Left ventricle myocardium superior (tissue), 1 donor: ENCODE measurements at regions of chr1 and their contacts with region 1.

Region 1: GRCh38 chr1:15272009-15272788 is 25.2 kb downstream of the FHAD1 start:
- DNase-seq: peak; percentile 60
- ATAC-seq: peak; percentile 88

Region 2: GRCh38 chr1:15128520-15129313 is 143.5 kb before region 1 on chr1:
- intact Hi-C with region 1: loop called (anchors 5 kb)
- DNase-seq: peak; percentile 78
- ATAC-seq: peak; percentile 95

Region 3: GRCh38 chr1:15141935-15142539 is 130.2 kb before region 1 on chr1:
- intact Hi-C with region 1: no loop called
- DNase-seq: peak; percentile 68
- ATAC-seq: peak; percentile 93

Region 4: GRCh38 chr1:15152318-15153183 is 119.6 kb before region 1 on chr1:
- intact Hi-C with region 1: loop called (anchors 10 kb)
- DNase-seq: peak; percentile 87
- ATAC-seq: peak; percentile 72

Region 5: DNA sequence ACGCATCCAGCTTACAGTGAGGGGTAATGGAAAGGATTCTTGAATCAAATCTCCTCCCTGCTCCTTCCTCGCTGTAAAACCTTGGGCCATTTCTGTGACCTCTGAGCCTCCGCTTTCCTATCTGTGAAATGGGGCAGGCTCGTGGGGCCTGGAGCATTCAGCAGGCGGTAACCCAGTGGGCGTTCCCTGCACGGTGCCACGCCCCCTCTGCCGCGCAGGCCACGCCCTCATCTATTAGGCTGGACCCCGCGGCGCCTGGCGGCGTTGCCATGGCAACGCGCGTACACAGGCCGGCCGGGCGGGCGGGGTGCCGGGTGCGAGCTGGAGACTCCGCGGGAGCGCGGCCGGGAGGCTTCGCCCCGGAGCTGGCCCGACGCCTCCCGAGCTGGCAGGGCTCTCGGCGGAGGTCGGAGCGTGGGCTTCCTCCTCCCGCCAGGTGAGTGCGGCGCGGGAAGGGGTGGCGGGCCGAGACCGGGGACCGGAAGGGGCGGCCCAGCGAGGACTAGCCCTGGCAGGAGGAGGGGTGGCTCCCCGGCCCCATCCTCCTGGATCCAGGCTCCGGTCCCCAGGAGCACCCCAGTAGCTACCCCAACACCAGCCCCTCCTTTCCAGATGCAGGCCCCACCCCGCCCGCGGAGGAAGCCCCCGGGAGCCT is 25.1 kb before region 1 on chr1 and contains the start of gene FHAD1:
- intact Hi-C with region 1: no loop called
- DNase-seq: peak; percentile 79
- ATAC-seq: peak; percentile 71
- total RNA-seq, gene FHAD1: not detected

Region 6: DNA sequence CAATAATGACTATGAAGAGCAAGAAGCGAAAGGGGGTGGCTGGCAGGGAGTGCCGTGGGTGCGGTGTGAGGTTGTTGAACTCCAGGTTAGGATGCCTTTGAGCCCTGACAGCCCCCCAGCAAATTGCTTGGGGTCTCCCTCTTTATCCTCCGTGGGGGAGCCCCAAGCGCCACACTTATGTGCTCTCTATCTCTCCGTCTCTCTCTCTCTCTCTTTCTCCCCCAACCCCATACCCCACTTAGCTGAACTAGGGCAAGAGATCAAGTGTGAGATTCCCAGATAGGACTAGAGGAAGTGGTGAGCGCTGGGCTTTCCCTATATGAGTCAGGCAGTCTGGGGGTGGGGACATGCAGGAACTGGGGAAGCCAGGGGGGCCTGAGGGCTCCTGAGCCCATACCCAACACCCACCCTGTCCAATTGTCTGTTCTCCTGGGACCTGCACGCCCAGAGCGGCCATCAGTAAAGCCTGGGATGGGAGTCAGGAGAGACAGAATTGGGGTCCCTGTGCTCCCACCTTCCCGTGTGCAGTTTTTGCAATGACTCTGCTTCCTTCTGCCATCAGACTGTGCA is 145.3 kb after region 1 on chr1:
- intact Hi-C with region 1: no loop called
- DNase-seq: peak; percentile 48
- ATAC-seq: peak; percentile 15